ENCODE measurements at regions of chr5 and their contacts with region 1.

Region 1: GRCh38 chr5:71569748-71570509 is 17.2 kb upstream of the MCCC2 start:
- DNase-seq: no peak
- H3K4me3 Mint-ChIP-seq: no peak overlapping the region
- H3K27ac Mint-ChIP-seq: no peak overlapping the region
- H3K4me1 Mint-ChIP-seq: no peaks in the 10 kb centered on the region
- H3K27me3 Mint-ChIP-seq: no peaks in the 10 kb centered on the region

Region 2: GRCh38 chr5:71734141-71734540 is 164.2 kb after region 1 on chr5:
- intact Hi-C with region 1: loop called (anchors 10 kb)
- DNase-seq: no peak
- H3K4me3 Mint-ChIP-seq: no peak overlapping the region
- H3K27ac Mint-ChIP-seq: no peak overlapping the region
- H3K4me1 Mint-ChIP-seq: no peaks in the 10 kb centered on the region
- H3K27me3 Mint-ChIP-seq: peaks cover 4% of the 10 kb centered on the region

Measured in activated T-helper 2 cell treated with anti-CD3 and anti-CD28 coated beads, Interferon-gamma antibody, Interleukin-2, Interleukin-4, amounts not matched to agents 10 μg/mL and 5 μg/mL and 100 μg/mL, durations not matched to agents 14 hours and 24 hours and 36 hours (primary cell).